Right cardiac atrium (tissue), 5 donors: ENCODE measurements at regions of chr12 and their contacts with region 1.

Region 1: GRCh38 chr12:50504798-50505385 is at the start of gene DIP2B:
- DNase-seq: peak; percentile 96 to 99 (median 98)
- ATAC-seq: peak; percentile 96 to 98
- H3K4me3 ChIP-seq: peak within 1 kb of the TSS; percentile 73
- H3K27ac ChIP-seq: peak within 1 kb of the TSS; percentile 79
- H3K4me1 ChIP-seq: peaks cover 7% of the 10 kb centered on the region
- H3K27me3 ChIP-seq: no peaks in the 10 kb centered on the region
- total RNA-seq, gene DIP2B: 10.7 to 16.8 (median 12.4) TPM

Region 2: DNA sequence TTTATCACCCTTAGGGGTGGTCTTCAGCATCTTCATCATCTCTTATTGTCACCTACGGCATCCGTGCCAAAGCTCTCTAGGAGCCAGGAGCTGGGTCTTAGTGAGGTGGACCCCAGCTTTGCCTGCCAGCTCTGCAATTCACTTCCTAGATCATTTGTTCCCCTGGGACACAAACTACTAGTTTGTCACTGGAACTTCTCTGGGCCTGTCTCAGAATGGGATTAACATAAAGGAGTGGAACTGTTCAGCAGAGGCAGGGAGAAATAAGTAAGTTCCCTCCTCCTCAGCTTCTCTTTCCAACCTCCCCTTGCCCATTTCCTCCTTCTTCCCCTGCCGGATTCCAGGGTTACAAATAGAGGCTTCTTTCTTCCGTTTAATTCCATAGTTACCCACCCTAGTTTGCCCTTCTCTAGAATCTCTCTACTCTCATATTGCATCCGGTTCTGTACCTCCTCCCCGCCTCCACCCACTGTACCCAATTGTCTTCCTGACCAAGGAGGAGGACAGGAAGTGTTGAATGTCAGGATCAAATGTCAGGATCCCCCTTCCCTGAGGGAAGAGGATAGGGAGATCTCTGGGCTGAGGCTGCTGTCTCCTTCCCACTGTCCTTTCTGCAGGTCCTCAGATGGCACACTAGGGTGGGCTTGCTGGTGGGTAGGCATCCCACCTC is 79.2 kb before region 1 on chr12:
- intact Hi-C with region 1: no loop called
- DNase-seq: no peak
- ATAC-seq: peak in 1 of 2 donors; percentile 67
- H3K4me3 ChIP-seq: no peak overlapping the region
- H3K27ac ChIP-seq: peak overlapping the region; percentile 23
- H3K4me1 ChIP-seq: peaks cover 6% of the 10 kb centered on the region
- H3K27me3 ChIP-seq: no peaks in the 10 kb centered on the region

Region 3: GRCh38 chr12:50572271-50572670 is 67.4 kb after region 1 on chr12:
- intact Hi-C with region 1: no loop called
- DNase-seq: no peak
- ATAC-seq: peak; percentile 57 to 78
- H3K4me3 ChIP-seq: no peak overlapping the region
- H3K27ac ChIP-seq: no peak overlapping the region
- H3K4me1 ChIP-seq: peaks cover 17% of the 10 kb centered on the region
- H3K27me3 ChIP-seq: no peaks in the 10 kb centered on the region

Region 4: DNA sequence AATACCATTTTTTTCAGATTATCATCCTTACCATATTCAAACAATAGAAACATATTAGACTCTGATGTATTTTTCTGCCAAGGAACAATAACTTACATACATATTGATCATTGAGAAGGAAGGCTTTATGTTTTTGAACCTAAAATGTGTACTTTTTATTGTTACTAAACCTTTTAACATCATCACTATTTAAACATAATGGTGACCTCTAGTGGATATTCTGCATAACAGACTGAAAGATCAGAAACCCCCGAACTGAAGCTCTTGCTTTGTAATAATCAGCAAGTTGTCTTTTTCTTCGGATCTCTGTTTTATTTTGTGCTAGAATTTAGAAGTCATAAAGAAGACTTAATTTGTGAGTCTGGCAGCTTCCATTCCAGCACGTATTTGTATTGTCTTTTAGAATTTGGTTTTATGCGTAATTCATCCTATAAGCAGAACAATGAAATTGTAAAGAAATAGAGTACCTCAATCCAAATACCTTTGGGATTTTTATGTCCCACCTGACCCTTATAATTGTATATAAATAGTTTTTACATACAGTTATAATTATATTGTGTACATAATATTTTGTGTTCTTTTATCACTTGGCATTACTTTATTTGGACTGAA is 133.1 kb after region 1 on chr12:
- intact Hi-C with region 1: loop called (anchors 2 to 5 kb)
- DNase-seq: no peak
- ATAC-seq: peak in 1 of 2 donors; percentile 37
- H3K4me3 ChIP-seq: no peak overlapping the region
- H3K27ac ChIP-seq: no peak overlapping the region
- H3K4me1 ChIP-seq: peaks cover 8% of the 10 kb centered on the region
- H3K27me3 ChIP-seq: no peaks in the 10 kb centered on the region

Region 5: DNA sequence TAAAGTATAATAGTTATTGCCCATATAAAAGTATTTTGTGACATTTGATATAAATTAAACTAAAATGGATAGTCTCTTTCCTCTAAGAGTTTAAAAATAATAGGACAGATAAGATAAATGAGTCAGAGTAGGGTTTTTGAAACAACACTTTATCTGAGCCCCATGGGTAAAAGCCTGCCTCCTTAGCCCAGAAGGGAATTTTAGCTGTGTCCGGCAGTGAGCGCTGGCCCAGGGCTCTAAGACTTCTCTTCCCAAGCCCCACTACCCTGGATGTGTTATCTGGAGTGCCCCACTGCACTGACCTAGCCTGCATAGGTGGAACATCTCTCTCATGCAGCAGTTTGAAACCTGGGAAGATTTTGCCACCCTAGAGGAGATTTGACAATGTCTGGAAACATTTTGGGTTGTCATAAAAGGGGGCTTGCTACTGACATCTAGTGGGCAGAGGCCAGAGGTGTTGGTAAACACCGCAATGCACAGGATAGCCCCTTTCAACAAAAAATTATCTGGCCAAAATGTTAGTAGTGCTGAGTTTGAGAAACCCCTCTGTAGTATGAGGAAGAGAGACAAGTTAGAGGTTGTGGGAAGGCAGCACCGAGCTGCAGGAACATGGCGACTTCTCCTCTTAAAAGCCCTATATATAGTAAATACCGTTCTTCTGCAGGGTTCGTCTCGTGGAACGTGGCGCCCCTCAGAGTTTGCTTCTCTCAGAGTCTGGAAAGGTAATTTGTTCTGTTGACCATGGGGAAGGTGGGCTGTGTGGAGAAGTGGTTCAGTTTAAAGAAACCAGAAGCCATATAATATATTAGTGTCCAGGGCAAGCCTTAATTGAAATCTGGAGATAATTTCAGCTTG is 229.7 kb after region 1 on chr12:
- intact Hi-C with region 1: loop called in 2 of 4 experiments (anchors 10 kb)
- DNase-seq: no peak
- ATAC-seq: peak in 1 of 2 donors; percentile 37
- H3K4me3 ChIP-seq: no peak overlapping the region
- H3K27ac ChIP-seq: no peak overlapping the region
- H3K4me1 ChIP-seq: no peaks in the 10 kb centered on the region
- H3K27me3 ChIP-seq: no peaks in the 10 kb centered on the region